Panc1 (cell line): ENCODE measurements at regions of chrX and their contacts with region 1.

Region 1: GRCh38 chrX:130734713-130735112 is 168.3 kb downstream of the ENOX2 start:
- DNase-seq: no peak
- ATAC-seq: no peak
- H3K4me3 ChIP-seq: no peak overlapping the region
- H3K27ac ChIP-seq: no peak overlapping the region
- H3K4me1 ChIP-seq: no peaks in the 10 kb centered on the region
- H3K27me3 ChIP-seq: no peaks in the 10 kb centered on the region
- CTCF ChIP-seq: no peak

Region 2: GRCh38 chrX:130468395-130468923 is 266.3 kb before region 1 on chrX:
- CTCF ChIA-PET with region 1: no interaction called
- POLR2A ChIA-PET with region 1: no interaction called
- in situ Hi-C with region 1: no loop called
- intact Hi-C with region 1: loop called (anchors 5 kb)
- DNase-seq: no peak
- ATAC-seq: no peak
- H3K4me3 ChIP-seq: no peak overlapping the region
- H3K27ac ChIP-seq: no peak overlapping the region
- H3K4me1 ChIP-seq: no peaks in the 10 kb centered on the region
- H3K27me3 ChIP-seq: peaks cover 22% of the 10 kb centered on the region; the same call in 1 of the 2 replicates
- CTCF ChIP-seq: no peak